ENCODE measurements at regions of chr1 and their contacts with region 1.

Region 1: GRCh38 chr1:26864610-26865527 is 1.9 kb downstream of the SFN start:
- DNase-seq: peak; percentile 97
- ATAC-seq: peak; percentile 94
- H3K4me3 Mint-ChIP-seq: peak overlapping the region; percentile 89
- H3K27ac Mint-ChIP-seq: peak overlapping the region; percentile 96
- H3K4me1 Mint-ChIP-seq: peaks cover 22% of the 10 kb centered on the region
- H3K27me3 Mint-ChIP-seq: no peaks in the 10 kb centered on the region

Region 2: GRCh38 chr1:25360596-25361581 is 1504.0 kb before region 1 on chr1:
- CTCF ChIA-PET with region 1: no interaction called
- POLR2A ChIA-PET with region 1: no interaction called
- intact Hi-C with region 1: no loop called
- DNase-seq: no peak
- ATAC-seq: no peak
- H3K4me3 Mint-ChIP-seq: no peak overlapping the region
- H3K27ac Mint-ChIP-seq: peak overlapping the region; percentile 33
- H3K4me1 Mint-ChIP-seq: peaks cover 16% of the 10 kb centered on the region
- H3K27me3 Mint-ChIP-seq: no peaks in the 10 kb centered on the region

Region 3: GRCh38 chr1:26472901-26473845 is 391.7 kb before region 1 on chr1:
- CTCF ChIA-PET with region 1: no interaction called
- POLR2A ChIA-PET with region 1: no interaction called
- intact Hi-C with region 1: loop called in 1 of 2 experiments (anchors 2 kb)
- DNase-seq: peak; percentile 97
- ATAC-seq: peak; percentile 62
- H3K4me3 Mint-ChIP-seq: peak overlapping the region; percentile 91
- H3K27ac Mint-ChIP-seq: peak overlapping the region; percentile 43
- H3K4me1 Mint-ChIP-seq: peaks cover 50% of the 10 kb centered on the region
- H3K27me3 Mint-ChIP-seq: no peaks in the 10 kb centered on the region

Region 4: GRCh38 chr1:26744075-26744959 is 120.6 kb before region 1 on chr1:
- CTCF ChIA-PET with region 1: no interaction called
- POLR2A ChIA-PET with region 1: interaction called, 4 read pairs
- intact Hi-C with region 1: loop called in 1 of 2 experiments (anchors 1 kb)
- DNase-seq: peak; percentile 90
- ATAC-seq: peak; percentile 93
- H3K4me3 Mint-ChIP-seq: peak overlapping the region; percentile 67
- H3K27ac Mint-ChIP-seq: peak overlapping the region; percentile 97
- H3K4me1 Mint-ChIP-seq: peaks cover 93% of the 10 kb centered on the region
- H3K27me3 Mint-ChIP-seq: no peaks in the 10 kb centered on the region

Region 5: DNA sequence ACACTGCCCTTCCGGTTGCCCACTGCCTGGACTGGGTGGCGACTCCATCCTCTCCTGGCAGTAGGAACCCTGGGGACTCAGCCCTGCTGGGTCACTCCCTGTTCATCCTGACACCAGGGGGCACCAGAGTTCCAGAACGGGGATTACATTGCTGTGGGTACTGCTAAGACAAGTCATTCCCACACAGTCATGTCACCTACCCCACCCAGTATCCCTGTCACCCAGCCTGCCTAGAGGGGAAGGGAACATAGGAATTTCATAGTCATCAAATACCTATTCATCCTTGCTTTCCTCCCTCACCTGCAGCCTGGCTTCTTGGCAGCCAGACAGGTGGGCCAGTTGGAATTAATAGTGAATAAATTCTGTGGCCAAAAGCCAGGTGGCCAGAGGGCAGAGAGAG is 11.7 kb before region 1 on chr1:
- CTCF ChIA-PET with region 1: interaction called, 10 read pairs
- POLR2A ChIA-PET with region 1: interaction called, 11 read pairs
- intact Hi-C with region 1: no loop called
- DNase-seq: peak; percentile 87
- ATAC-seq: peak; percentile 84
- H3K4me3 Mint-ChIP-seq: no peak overlapping the region
- H3K27ac Mint-ChIP-seq: no peak overlapping the region
- H3K4me1 Mint-ChIP-seq: no peaks in the 10 kb centered on the region
- H3K27me3 Mint-ChIP-seq: no peaks in the 10 kb centered on the region

Region 6: GRCh38 chr1:26889551-26890466 is 24.9 kb after region 1 on chr1 and contains the start of gene GPN2:
- CTCF ChIA-PET with region 1: interaction called, 6 read pairs
- POLR2A ChIA-PET with region 1: interaction called, 20 read pairs
- intact Hi-C with region 1: loop called (anchors 1 kb)
- DNase-seq: peak; percentile 86
- ATAC-seq: peak; percentile 97
- H3K4me3 Mint-ChIP-seq: peak within 1 kb of the TSS; percentile 92
- H3K27ac Mint-ChIP-seq: peak within 1 kb of the TSS; percentile 91
- H3K4me1 Mint-ChIP-seq: peaks cover 22% of the 10 kb centered on the region
- H3K27me3 Mint-ChIP-seq: no peaks in the 10 kb centered on the region
- total RNA-seq, gene GPN2: 44.3 to 45.6 TPM

Region 7: GRCh38 chr1:26907071-26907917 is 42.4 kb after region 1 on chr1:
- CTCF ChIA-PET with region 1: no interaction called
- POLR2A ChIA-PET with region 1: no interaction called
- intact Hi-C with region 1: no loop called
- DNase-seq: no peak
- ATAC-seq: no peak
- H3K4me3 Mint-ChIP-seq: no peak overlapping the region
- H3K27ac Mint-ChIP-seq: no peak overlapping the region
- H3K4me1 Mint-ChIP-seq: no peaks in the 10 kb centered on the region
- H3K27me3 Mint-ChIP-seq: no peaks in the 10 kb centered on the region

Region 8: GRCh38 chr1:26921540-26922430 is 56.9 kb after region 1 on chr1 and contains the start of gene NUDC:
- CTCF ChIA-PET with region 1: no interaction called
- POLR2A ChIA-PET with region 1: no interaction called
- intact Hi-C with region 1: loop called in 1 of 2 experiments (anchors 1 kb)
- DNase-seq: peak; percentile 98
- ATAC-seq: peak; percentile 98
- H3K4me3 Mint-ChIP-seq: peak within 1 kb of the TSS; percentile 82
- H3K27ac Mint-ChIP-seq: peak within 1 kb of the TSS; percentile 90
- H3K4me1 Mint-ChIP-seq: peaks cover 38% of the 10 kb centered on the region
- H3K27me3 Mint-ChIP-seq: no peaks in the 10 kb centered on the region
- total RNA-seq, gene NUDC: 95.9 to 101 TPM

Region 9: GRCh38 chr1:26949926-26950319 is 85.1 kb after region 1 on chr1:
- CTCF ChIA-PET with region 1: no interaction called
- POLR2A ChIA-PET with region 1: no interaction called
- intact Hi-C with region 1: no loop called
- DNase-seq: no peak
- ATAC-seq: no peak
- H3K4me3 Mint-ChIP-seq: no peak overlapping the region
- H3K27ac Mint-ChIP-seq: no peak overlapping the region
- H3K4me1 Mint-ChIP-seq: no peaks in the 10 kb centered on the region
- H3K27me3 Mint-ChIP-seq: no peaks in the 10 kb centered on the region

Region 10: DNA sequence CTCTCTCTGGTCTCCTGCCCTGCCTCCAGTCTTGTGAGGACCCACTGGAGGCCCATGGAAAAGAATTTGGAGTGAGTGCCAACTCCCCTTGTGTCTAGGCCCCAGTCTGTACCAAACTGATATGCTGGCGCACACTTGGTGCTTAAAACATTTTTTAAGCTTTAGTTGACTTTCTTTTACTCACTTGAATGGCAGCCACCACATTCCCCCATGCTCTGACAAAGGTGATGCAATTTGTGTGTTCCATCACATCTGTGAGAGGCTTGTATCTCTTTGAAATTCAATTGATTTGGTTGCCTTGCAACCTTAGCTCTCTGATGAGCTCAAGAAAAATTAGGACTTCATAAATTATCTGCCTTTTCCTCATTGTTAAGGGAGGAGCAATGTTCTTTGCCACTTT is 339.1 kb after region 1 on chr1:
- CTCF ChIA-PET with region 1: no interaction called
- POLR2A ChIA-PET with region 1: no interaction called
- intact Hi-C with region 1: no loop called
- DNase-seq: no peak
- ATAC-seq: no peak
- H3K4me3 Mint-ChIP-seq: no peak overlapping the region
- H3K27ac Mint-ChIP-seq: no peak overlapping the region
- H3K4me1 Mint-ChIP-seq: no peaks in the 10 kb centered on the region
- H3K27me3 Mint-ChIP-seq: no peaks in the 10 kb centered on the region

Measured in activated CD4-positive, alpha-beta T cell treated with anti-CD3 and anti-CD28 coated beads for 36 hours (primary cell).